SK-N-SH (cell line): ENCODE measurements at regions of chr17 and their contacts with region 1.

Region 1: DNA sequence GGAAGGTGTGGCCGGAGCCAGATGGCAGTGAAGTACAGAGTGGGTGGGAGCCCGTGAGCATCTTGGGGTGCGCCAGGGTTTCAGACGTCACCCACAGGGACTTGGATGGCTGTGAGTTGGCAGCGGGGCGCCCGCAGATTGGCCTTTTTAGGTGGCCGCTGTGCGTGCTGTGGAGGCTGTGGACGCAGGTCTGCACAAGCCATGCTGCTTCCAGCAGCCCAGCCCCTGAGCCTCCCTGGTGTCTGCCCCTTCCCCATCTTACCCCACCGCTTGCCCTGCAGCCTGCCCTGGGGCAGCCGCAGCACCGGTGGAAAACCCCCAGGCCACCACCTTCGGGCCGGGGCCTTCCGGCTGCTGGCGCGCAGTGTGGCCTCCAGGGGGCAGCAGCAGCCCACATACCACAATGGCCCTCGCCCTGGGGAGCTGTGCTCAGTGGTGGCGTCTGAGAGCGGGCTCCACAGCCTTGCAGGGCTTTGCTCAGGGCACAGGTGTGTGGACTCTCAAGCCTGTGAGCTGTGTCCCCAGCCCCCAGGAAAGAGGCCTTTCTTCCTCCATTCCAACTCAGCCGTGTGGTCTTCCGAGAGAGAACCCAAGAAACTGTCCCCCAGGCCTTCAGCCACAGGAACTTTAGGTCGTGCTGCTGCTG is 11.8 kb downstream of the ENDOV start:
- DNase-seq: peak; percentile 98
- H3K4me3 ChIP-seq: no peak overlapping the region; a peak in 1 of 4 replicates
- H3K27ac ChIP-seq: no peak overlapping the region
- H3K4me1 ChIP-seq: no peaks in the 10 kb centered on the region; a peak in 1 of 4 replicates
- H3K27me3 ChIP-seq: no peaks in the 10 kb centered on the region
- CTCF ChIP-seq: peak; percentile 99
- EP300 ChIP-seq: no peak
- RAD21 ChIP-seq: peak; percentile 99

Region 2: DNA sequence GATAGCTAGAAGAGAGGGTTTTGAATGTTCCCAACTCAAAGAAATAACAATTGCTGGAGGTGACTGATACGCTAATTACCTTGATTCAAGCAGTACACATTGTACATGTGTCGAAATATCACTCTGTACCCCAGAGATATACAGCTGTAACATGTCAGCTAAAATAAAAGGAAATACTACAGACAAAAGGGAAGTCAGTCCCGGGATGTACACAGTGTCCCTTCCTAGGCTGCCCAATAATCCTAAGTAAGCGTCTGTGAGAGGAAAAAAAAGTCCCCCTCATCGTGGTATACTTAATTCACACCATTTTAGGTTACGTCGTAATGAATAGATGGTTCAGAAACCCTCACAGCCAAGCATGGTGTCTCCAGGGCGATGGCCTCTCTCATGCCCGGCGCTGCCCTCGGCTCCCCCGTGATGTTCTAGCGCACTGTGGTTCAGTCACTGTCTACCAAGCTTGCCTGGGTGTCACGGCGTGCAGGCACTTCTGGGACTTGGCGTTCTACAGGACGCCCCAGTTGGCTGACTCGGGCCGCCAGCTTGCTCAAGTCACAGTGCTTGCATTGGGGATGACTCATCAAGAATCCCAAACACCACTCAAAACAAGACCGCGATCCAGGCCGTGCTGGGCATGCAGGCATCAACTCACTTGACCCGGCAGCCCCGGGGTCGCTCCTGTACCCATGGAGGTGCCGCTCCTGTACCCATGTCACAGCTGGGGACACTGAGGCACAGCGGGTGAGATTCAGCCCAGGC is 362.8 kb before region 1 on chr17:
- CTCF ChIA-PET with region 1: no interaction called
- POLR2A ChIA-PET with region 1: no interaction called
- DNase-seq: no peak
- H3K4me3 ChIP-seq: no peak overlapping the region
- H3K27ac ChIP-seq: no peak overlapping the region
- H3K4me1 ChIP-seq: no peaks in the 10 kb centered on the region; a peak in 1 of 4 replicates
- H3K27me3 ChIP-seq: no peaks in the 10 kb centered on the region
- CTCF ChIP-seq: no peak
- EP300 ChIP-seq: no peak
- RAD21 ChIP-seq: no peak

Region 3: GRCh38 chr17:80129003-80129565 is 297.7 kb before region 1 on chr17:
- CTCF ChIA-PET with region 1: no interaction called
- POLR2A ChIA-PET with region 1: no interaction called
- DNase-seq: no peak
- H3K4me3 ChIP-seq: no peak overlapping the region
- H3K27ac ChIP-seq: no peak overlapping the region
- H3K4me1 ChIP-seq: no peaks in the 10 kb centered on the region
- H3K27me3 ChIP-seq: no peaks in the 10 kb centered on the region
- CTCF ChIP-seq: no peak
- EP300 ChIP-seq: no peak
- RAD21 ChIP-seq: no peak

Region 4: DNA sequence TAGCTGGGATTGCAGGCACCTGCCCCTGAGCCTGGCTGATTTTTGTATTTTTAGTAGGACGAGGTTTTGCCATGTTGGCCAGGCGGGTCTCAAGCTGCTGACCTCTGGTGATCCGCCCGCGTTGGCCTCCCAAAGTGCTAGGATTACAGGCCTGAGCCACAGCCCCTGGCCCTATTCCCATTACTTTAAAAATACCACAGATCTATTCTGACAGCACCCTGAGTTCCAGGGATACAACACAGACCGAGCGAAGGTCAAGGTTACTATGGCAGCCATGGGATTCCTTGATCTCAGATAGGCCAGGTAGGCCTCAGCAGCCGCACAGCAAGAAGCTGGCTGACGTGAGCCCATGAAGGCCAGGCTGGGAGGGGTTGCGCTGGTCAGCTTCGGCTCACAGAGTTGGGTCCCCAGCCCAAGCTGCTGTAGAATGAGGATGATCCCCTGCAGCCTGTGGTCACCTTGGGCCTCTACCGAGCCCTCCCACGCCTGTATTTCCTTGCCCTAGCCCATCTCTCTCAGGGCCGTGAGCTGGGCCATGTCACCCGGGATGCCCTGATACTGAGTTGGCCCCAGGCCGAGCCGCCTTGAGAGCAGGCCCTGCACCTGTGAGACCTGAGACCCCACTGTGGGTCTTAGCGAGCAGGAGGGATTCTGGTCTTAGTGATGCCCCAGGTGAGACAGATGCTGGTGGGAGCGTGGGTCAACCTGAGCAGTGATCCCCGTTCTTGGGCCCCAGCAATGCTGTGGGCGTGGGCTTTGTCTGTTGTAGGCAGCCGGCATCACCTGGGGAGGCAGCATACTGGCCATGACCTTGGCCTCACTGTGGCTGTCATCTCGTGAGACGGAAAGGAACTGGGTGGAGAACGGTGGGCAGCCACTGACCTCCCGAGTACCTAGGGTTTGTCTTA is 183.0 kb before region 1 on chr17:
- CTCF ChIA-PET with region 1: no interaction called
- POLR2A ChIA-PET with region 1: no interaction called
- DNase-seq: no peak
- H3K4me3 ChIP-seq: no peak overlapping the region
- H3K27ac ChIP-seq: no peak overlapping the region
- H3K4me1 ChIP-seq: no peaks in the 10 kb centered on the region
- H3K27me3 ChIP-seq: no peaks in the 10 kb centered on the region
- CTCF ChIP-seq: no peak
- EP300 ChIP-seq: no peak
- RAD21 ChIP-seq: no peak

Region 5: DNA sequence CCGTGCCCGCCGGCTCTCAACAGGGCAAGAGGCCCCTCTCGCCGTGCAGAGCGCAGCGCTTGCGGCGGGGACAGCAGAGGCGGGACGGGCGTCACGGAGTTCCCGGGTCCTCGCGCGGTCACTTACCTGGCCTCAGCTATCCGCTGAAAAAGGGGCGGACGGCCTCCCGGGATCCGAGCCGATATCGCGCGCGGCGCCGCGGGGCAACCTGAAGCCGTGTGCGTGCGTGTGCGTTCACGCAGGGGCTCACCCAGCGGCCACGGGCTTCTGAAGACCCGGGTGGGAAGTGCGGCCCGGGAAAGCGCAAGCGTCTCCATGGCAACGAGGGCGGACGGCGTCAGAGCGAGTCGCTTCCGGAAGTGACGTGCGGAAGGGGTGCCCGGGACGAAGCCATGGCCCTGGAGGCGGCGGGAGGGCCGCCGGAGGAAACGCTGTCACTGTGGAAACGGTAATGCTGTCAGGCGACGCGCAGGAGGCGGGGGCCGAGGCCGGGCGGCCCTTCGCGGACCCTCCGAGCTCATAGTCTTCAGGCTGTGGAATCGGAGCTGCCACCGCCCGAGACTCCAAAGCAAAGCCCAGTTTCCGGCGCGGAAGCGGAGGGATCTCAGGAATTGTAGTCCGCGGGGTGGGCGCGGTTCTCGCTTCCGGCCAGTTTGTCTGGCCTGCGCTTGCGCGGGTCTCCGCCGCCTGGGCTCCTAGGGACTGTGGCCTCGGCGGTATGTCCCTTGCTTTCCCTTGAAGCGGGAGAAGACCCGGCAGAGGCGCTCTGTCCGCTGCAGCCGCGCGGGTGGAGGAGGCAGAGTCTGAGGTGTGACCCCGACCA is 11.8 kb before region 1 on chr17 and contains the start of gene ENDOV:
- CTCF ChIA-PET with region 1: interaction called, 47 read pairs
- POLR2A ChIA-PET with region 1: interaction called, 6 read pairs
- DNase-seq: peak; percentile 100
- H3K4me3 ChIP-seq: peak within 1 kb of the TSS; percentile 98 to 99
- H3K27ac ChIP-seq: peak within 1 kb of the TSS; percentile 99
- H3K4me1 ChIP-seq: peaks cover 5 to 25% of the 10 kb centered on the region in 2 experiments; a peak in 2 of 4 replicates
- H3K27me3 ChIP-seq: no peaks in the 10 kb centered on the region
- CTCF ChIP-seq: no peak
- EP300 ChIP-seq: 0 out of 4 replicates have a peak, but pooled peaks of 1 of the 2 experiments have one; percentile 23
- RAD21 ChIP-seq: no peak
- polyA plus RNA-seq, gene ENDOV: 83.6 and 90.3 TPM in 2 replicates

Region 6: GRCh38 chr17:80454557-80455335 is 27.9 kb after region 1 on chr17:
- CTCF ChIA-PET with region 1: interaction called, 12 read pairs
- POLR2A ChIA-PET with region 1: interaction called, 10 read pairs
- DNase-seq: peak; percentile 100
- H3K4me3 ChIP-seq: peak overlapping the region; percentile 71 to 78
- H3K27ac ChIP-seq: peak overlapping the region; percentile 79 to 97
- H3K4me1 ChIP-seq: peaks cover 0 to 34% of the 10 kb centered on the region in 2 experiments; a peak in 1 of 4 replicates
- H3K27me3 ChIP-seq: no peaks in the 10 kb centered on the region
- CTCF ChIP-seq: no peak; the same call in 1 of the 2 replicates
- EP300 ChIP-seq: no peak
- RAD21 ChIP-seq: no peak

Region 7: GRCh38 chr17:80477647-80478478 is 51.1 kb after region 1 on chr17:
- CTCF ChIA-PET with region 1: interaction called, 30 read pairs
- POLR2A ChIA-PET with region 1: no interaction called
- DNase-seq: peak; percentile 95
- H3K4me3 ChIP-seq: peak overlapping the region; percentile 29 to 58
- H3K27ac ChIP-seq: no peak overlapping the region
- H3K4me1 ChIP-seq: peaks cover 0 to 14% of the 10 kb centered on the region in 2 experiments; a peak in 1 of 4 replicates
- H3K27me3 ChIP-seq: peaks cover 95% of the 10 kb centered on the region
- CTCF ChIP-seq: peak; percentile 60
- EP300 ChIP-seq: no peak
- RAD21 ChIP-seq: peak; percentile 77

Region 8: GRCh38 chr17:80981062-80981902 is 554.5 kb after region 1 on chr17:
- CTCF ChIA-PET with region 1: interaction called, 81 read pairs
- POLR2A ChIA-PET with region 1: interaction called, 3 read pairs
- DNase-seq: peak; percentile 99
- H3K4me3 ChIP-seq: peak overlapping the region; percentile 25 to 44
- H3K27ac ChIP-seq: no peak overlapping the region
- H3K4me1 ChIP-seq: no peaks in the 10 kb centered on the region; a peak in 1 of 4 replicates
- H3K27me3 ChIP-seq: no peaks in the 10 kb centered on the region
- CTCF ChIP-seq: peak; percentile 96
- EP300 ChIP-seq: no peak
- RAD21 ChIP-seq: peak; percentile 86